Activated B cell treated with CpG ODN at 0.5 μM for 24 hours (primary cell): ENCODE measurements at regions of chr3 and their contacts with region 1.

Region 1: DNA sequence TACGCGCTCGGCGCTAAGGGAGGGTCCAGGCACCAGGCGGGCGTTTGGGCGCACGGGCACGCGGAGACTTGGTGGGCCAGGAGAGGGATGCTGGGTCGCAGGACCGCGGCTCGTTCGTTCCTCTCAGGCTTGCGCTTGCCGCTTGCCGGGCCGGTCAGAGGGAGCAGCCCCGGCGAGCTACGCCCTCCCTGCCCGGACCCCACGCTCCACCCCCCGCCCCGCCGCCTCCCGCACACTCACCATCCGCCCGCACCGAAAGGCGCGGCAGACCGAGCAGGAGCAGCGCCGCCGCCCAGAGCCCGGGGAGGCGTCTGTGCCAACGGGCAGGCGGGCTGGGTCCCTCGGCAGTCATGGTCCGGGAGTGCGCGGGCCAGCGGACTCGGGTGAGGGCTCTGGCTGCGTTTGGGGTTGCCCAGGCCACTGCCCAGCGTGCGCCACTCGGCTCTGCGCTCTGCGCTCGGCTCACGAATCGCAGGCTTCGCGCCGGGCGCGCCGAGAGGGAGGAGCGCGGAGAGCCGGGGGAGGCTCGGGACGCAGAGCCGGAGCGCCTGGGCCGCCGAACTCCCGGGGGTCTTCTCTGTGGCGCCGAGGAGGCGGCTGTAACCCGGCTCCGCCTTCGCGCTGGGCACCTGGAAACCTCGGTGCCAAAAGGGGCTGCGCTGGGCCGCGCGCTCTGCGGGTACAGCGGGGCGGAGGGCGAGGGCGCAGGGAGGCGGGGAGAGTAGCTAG is at the start of gene SUSD5:
- DNase-seq: no peak
- ATAC-seq: no peak
- H3K4me3 Mint-ChIP-seq: peak within 1 kb of the TSS; percentile 29
- H3K27ac Mint-ChIP-seq: no peak within 1 kb of the TSS
- H3K4me1 Mint-ChIP-seq: peaks cover 21% of the 10 kb centered on the region
- H3K27me3 Mint-ChIP-seq: peaks cover 39% of the 10 kb centered on the region
- CTCF ChIP-seq: no peak
- total RNA-seq, gene SUSD5: 0.05 and 0.33 TPM in 2 replicates

Region 2: DNA sequence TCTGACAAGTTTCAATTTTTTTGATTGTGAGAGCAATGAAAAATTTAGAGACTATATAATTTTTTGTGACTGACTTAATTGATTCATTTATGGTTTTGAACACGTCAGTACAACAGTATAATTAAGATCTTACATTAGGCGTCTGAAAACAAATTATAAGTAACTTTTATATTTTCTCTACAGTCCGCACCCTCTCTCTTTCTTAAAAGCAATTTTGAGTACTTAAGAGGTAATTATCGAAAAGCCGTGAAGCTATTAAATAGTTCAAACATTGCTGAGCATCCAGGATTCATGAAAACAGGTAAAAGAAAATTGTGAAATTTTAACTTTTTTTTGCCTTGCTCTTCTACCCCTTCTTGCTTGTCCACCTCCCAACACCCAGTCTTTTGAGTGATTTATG is 498.7 kb before region 1 on chr3:
- CTCF ChIA-PET with region 1: no interaction called
- POLR2A ChIA-PET with region 1: interaction called, 11 read pairs
- intact Hi-C with region 1: no loop called
- DNase-seq: no peak
- ATAC-seq: no peak
- H3K4me3 Mint-ChIP-seq: no peak overlapping the region
- H3K27ac Mint-ChIP-seq: no peak overlapping the region
- H3K4me1 Mint-ChIP-seq: no peaks in the 10 kb centered on the region
- H3K27me3 Mint-ChIP-seq: no peaks in the 10 kb centered on the region
- CTCF ChIP-seq: no peak

Region 3: DNA sequence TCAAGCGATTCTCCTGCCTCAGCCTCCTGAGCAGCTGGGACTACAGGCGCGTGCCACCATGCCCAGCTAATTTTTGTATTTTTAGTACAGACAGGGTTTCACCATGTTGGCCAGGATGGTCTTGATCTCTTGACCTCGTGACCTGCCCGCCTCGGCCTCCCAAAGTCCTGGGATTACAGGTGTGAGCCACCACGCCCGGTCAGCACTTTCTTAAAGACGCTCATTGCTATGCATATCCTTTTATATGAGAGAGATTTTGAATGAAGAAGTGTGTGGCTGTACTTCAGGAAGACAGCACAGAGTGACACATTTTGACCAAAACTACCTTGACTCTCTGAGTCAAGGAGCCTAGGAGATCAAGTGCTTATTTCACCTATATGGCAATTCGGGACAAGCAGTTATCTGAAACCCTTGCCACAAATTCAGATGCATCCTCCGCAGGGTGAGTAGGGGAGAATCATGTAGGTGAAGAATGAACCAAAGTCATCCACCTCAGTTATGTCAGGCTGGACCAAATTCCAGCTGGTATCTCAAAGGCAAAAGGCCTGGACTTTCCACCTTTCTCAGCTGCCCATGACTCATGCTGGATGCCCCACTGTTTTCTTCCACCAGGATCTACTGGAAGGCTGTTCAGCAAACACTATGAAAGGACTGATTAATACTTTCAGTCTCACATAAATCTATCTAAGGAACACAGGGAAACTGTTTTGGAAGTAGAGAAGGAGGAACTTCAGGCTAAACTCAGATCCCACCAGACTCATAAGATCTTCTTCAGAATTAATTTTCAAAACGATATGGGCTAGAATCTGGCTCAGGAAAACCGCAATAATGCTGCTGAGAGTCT is 31.9 kb before region 1 on chr3:
- CTCF ChIA-PET with region 1: no interaction called
- POLR2A ChIA-PET with region 1: no interaction called
- intact Hi-C with region 1: no loop called
- DNase-seq: no peak
- ATAC-seq: no peak
- H3K4me3 Mint-ChIP-seq: no peak overlapping the region
- H3K27ac Mint-ChIP-seq: no peak overlapping the region
- H3K4me1 Mint-ChIP-seq: no peaks in the 10 kb centered on the region
- H3K27me3 Mint-ChIP-seq: peaks cover 12% of the 10 kb centered on the region
- CTCF ChIP-seq: no peak